Activated B cell treated with CpG ODN at 0.5 μM for 24 hours (primary cell): ENCODE measurements at regions of chr11 and their contacts with region 1.

Region 1: GRCh38 chr11:6757373-6757967 is 14.3 kb downstream of the OR2AG2 start:
- DNase-seq: no peak
- ATAC-seq: peak; percentile 78
- H3K4me3 Mint-ChIP-seq: no peak overlapping the region
- H3K27ac Mint-ChIP-seq: no peak overlapping the region
- H3K4me1 Mint-ChIP-seq: no peaks in the 10 kb centered on the region
- H3K27me3 Mint-ChIP-seq: peaks cover 3% of the 10 kb centered on the region
- CTCF ChIP-seq: peak; percentile 41

Region 2: DNA sequence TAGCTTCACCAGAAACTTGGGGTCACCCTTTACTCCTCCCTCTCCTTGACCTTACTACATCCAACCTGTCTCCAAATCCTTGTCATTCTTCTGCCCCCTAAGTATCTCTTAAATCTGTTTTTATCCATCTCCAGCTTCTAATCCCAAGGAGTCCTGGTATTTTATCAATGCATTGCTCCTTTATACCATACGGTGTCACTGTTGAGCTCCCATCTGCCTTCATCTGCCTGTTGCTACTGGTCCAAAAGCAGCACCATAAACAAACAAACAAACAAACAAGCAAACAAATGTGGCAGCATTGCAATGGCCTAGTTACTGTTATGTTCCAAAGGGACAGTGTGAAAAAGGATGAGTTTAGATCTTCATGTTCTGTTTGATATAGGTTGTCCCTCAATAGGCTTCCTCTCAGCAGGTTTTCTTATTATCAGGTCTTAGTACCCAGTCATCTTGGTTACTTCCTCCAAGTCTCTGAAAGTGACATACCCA is 226.2 kb before region 1 on chr11:
- CTCF ChIA-PET with region 1: interaction called, 20 read pairs
- POLR2A ChIA-PET with region 1: no interaction called
- intact Hi-C with region 1: loop called (anchors 1 kb)
- DNase-seq: no peak
- ATAC-seq: peak; percentile 60
- H3K4me3 Mint-ChIP-seq: no peak overlapping the region
- H3K27ac Mint-ChIP-seq: no peak overlapping the region
- H3K4me1 Mint-ChIP-seq: peaks cover 6% of the 10 kb centered on the region
- H3K27me3 Mint-ChIP-seq: no peaks in the 10 kb centered on the region
- CTCF ChIP-seq: peak; percentile 35

Region 3: DNA sequence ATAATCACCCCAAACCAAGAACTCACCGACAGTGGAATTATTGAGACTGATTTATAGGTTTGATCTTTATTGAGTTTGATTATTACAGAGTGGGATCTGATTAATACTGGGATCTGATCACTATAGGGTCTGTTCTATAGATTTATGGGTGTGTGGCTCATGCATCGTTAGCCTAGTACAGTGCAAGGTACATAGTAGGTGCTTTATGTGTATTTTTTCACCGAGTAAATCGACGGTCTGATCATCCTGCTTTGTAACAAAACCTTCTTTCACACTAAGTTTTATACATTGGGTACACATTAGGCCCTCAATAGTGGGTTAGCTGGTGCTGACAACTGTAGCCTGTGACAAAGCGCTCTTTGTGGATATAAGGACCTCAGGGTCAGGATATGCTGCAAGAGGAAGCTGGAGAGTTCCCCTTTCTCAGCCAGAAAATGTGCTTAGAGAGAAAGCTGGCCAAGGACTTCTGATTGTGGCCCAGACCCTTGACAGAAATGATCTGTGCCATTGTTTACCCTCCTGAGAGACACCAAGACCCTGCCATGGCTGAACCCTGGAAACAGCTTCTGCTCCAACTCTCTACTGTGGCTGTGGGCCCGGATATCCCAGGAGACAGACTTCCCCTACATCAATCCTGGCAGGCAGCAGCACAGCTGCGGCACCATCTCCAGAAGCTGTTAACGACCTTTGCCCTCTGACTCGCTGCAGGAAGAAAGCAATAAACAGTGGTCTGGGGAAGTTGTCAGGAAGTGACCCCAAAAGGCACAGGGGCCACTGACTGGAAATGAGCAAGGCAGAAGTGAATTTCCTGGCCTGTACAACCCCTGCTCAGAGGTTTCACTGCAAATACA is 122.2 kb before region 1 on chr11:
- CTCF ChIA-PET with region 1: no interaction called
- POLR2A ChIA-PET with region 1: no interaction called
- intact Hi-C with region 1: no loop called
- DNase-seq: no peak
- ATAC-seq: no peak
- H3K4me3 Mint-ChIP-seq: no peak overlapping the region
- H3K27ac Mint-ChIP-seq: no peak overlapping the region
- H3K4me1 Mint-ChIP-seq: no peaks in the 10 kb centered on the region
- H3K27me3 Mint-ChIP-seq: no peaks in the 10 kb centered on the region
- CTCF ChIP-seq: no peak

Region 4: DNA sequence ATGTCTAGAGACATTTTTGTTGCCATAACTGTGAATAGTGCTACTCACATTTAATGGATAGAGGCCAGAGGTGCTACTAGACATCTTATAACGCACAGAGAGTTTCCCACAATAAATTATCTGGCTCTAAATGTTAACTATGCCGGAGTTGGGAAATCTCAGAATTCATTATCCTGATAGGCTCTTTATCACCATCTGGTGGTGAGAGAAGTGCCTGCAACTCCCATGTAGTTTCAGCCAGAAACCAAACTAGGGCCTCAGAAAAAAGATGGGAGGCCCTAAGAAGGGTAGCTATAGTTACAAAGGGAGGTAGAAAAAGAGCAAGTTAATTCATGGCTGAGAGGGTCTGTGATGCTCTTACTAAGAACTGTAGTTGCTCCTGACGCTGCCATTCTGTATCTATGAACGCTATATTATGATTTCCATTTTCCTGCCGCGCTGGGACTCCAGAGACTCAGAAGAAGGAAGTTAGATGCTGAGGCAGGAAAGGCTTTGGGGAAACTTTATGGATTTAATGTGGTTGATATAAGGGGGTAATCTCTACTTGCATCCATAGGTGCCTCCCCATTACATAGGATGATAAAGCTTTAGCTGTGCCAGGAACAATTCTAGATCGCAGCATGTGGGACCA is 51.5 kb before region 1 on chr11:
- CTCF ChIA-PET with region 1: interaction called, 53 read pairs
- POLR2A ChIA-PET with region 1: no interaction called
- intact Hi-C with region 1: loop called (anchors 1 kb)
- DNase-seq: no peak
- ATAC-seq: peak; percentile 66
- H3K4me3 Mint-ChIP-seq: no peak overlapping the region
- H3K27ac Mint-ChIP-seq: peak overlapping the region; percentile 60
- H3K4me1 Mint-ChIP-seq: peaks cover 19% of the 10 kb centered on the region
- H3K27me3 Mint-ChIP-seq: no peaks in the 10 kb centered on the region
- CTCF ChIP-seq: peak; percentile 92

Region 5: DNA sequence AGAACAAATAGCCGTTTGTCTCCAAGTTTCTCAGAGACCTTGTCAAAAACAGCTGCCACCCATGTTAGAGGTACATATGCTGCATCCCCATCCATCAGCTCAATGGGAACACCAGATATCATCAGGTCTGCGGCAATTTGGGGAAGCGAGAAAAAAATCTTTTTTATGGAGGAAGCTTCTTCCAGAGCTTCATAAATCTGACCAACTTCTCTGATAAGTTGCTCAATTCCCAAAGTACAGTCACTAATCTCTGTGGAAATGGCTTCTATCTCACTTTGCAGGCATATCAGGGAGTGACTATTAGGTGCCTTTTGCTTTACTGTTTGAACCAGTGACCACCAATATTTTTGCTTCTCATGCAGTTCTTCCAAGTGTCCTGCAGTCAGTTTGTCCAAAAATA is 40.0 kb before region 1 on chr11:
- CTCF ChIA-PET with region 1: interaction called, 55 read pairs
- POLR2A ChIA-PET with region 1: no interaction called
- intact Hi-C with region 1: no loop called
- DNase-seq: no peak
- ATAC-seq: no peak
- H3K4me3 Mint-ChIP-seq: no peak overlapping the region
- H3K27ac Mint-ChIP-seq: no peak overlapping the region
- H3K4me1 Mint-ChIP-seq: peaks cover 25% of the 10 kb centered on the region
- H3K27me3 Mint-ChIP-seq: no peaks in the 10 kb centered on the region
- CTCF ChIP-seq: no peak

Region 6: DNA sequence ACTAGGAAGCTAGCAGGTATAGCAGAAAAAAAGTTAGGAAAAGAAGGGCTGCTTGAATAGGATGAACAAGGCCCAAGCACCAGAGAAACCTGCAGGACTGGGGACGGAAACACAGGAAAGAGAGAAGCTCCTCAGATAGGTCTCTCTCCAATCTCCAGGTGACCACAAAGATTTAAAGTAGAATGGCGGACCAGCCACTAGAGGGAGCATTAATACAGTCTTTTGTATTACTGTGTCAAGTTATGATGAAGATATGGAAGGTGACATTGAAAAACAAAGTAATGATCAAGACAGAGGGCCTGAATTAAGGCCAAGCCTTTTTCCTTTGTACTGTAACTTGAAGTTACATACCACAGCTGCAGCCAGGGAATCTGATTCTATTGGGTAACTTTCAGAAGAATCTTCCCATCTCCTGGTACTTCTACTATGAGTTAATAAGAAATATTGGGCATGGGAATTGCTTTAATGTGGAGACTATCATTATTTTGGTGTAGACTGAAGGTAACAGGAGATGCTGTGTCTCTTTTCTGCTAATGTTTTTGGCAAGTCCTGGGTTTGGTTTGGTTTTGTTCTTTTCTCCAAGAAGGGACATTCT is 19.5 kb before region 1 on chr11:
- CTCF ChIA-PET with region 1: interaction called, 391 read pairs
- POLR2A ChIA-PET with region 1: interaction called, 4 read pairs
- intact Hi-C with region 1: loop called (anchors 1 kb)
- DNase-seq: no peak
- ATAC-seq: peak; percentile 75
- H3K4me3 Mint-ChIP-seq: no peak overlapping the region
- H3K27ac Mint-ChIP-seq: peak overlapping the region; percentile 62
- H3K4me1 Mint-ChIP-seq: peaks cover 72% of the 10 kb centered on the region
- H3K27me3 Mint-ChIP-seq: no peaks in the 10 kb centered on the region
- CTCF ChIP-seq: peak; percentile 37

Region 7: GRCh38 chr11:6799402-6799801 is 41.9 kb after region 1 on chr11 and contains the start of gene OR6A2:
- CTCF ChIA-PET with region 1: no interaction called
- POLR2A ChIA-PET with region 1: no interaction called
- intact Hi-C with region 1: no loop called
- DNase-seq: no peak
- ATAC-seq: no peak
- H3K4me3 Mint-ChIP-seq: no peak within 1 kb of the TSS
- H3K27ac Mint-ChIP-seq: no peak within 1 kb of the TSS
- H3K4me1 Mint-ChIP-seq: no peaks in the 10 kb centered on the region
- H3K27me3 Mint-ChIP-seq: no peaks in the 10 kb centered on the region
- CTCF ChIP-seq: no peak
- total RNA-seq, gene OR6A2: 0.18 and 0.20 TPM in 2 replicates

Region 8: DNA sequence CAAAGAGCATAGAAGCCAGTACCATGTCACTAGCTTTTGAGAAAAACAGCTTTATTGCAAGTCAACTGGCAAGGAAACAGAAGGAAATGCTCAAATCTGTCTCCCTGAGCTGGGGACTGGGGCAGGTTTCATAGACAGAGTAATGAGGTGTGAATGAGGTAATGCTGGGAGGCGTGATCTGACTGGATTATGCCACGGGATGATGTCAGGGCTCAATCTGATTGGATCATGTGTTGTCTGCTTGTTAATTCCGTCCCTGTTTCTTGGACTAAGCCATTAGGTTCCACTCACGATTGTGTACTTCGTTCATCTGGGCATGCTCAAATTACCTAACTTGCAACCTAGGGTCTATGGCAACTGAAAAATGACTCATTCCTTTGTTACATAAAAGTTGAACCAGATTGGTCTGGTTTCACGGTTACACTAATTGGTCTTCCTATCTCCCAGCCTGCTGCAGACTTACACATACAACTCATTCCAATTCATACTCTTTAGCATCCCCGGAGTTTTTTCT is 67.8 kb after region 1 on chr11:
- CTCF ChIA-PET with region 1: no interaction called
- POLR2A ChIA-PET with region 1: no interaction called
- intact Hi-C with region 1: no loop called
- DNase-seq: no peak
- ATAC-seq: no peak
- H3K4me3 Mint-ChIP-seq: no peak overlapping the region
- H3K27ac Mint-ChIP-seq: no peak overlapping the region
- H3K4me1 Mint-ChIP-seq: no peaks in the 10 kb centered on the region
- H3K27me3 Mint-ChIP-seq: peaks cover 1% of the 10 kb centered on the region
- CTCF ChIP-seq: no peak